GM13976 (cell line): ENCODE measurements at regions of chr10 and their contacts with region 1.

Region 1: GRCh38 chr10:74748468-74749031 is 77.8 kb upstream of the KAT6B start:
- DNase-seq: no peak
- CTCF ChIP-seq: no peak

Region 2: DNA sequence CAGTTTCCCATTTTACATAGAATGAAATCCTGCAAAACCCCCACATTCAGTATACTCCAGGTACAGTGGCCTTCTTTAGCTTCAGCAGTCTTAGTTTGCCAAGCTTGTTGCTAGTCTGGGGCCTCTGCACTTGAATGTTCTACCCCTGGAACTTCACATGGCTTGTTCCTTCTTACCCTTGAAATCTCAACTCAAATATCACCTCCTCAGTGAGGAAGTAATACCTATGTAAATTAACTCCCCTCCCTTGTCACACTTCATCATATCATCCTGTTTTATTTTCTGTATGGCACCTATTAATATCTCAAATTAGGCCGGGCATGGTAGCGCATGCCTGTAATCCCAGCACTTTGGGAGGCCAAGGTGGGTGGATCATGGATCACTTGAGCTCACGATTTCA is 85.9 kb before region 1 on chr10:
- in situ Hi-C with region 1: no loop called
- DNase-seq: no peak
- CTCF ChIP-seq: no peak

Region 3: DNA sequence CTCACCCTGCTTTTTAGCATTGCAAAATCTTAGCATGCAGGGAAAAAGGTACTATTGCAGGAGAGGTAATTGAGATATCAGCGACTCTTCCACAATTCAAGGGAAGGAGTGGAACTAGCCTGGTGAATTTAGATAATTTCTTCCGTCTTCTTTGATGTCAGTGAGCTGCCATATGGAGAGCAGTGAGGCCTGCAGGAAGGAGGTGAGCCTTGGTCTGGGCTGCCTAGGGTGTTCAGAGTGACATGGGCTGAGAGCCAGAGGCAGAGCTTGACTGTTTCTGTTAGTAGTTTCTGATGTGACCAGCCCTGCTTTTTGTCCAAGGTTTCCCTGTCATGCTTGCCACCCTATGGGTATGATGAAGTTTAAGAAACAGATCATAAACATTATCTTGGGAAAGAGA is 106.5 kb after region 1 on chr10:
- in situ Hi-C with region 1: no loop called
- DNase-seq: no peak
- CTCF ChIP-seq: no peak

Region 4: GRCh38 chr10:75029857-75030256 is 281.3 kb after region 1 on chr10:
- in situ Hi-C with region 1: loop called (anchors 10 kb)
- DNase-seq: no peak
- CTCF ChIP-seq: no peak

Region 5: GRCh38 chr10:75099952-75100763 is 351.6 kb after region 1 on chr10:
- in situ Hi-C with region 1: loop called (anchors 10 kb)
- DNase-seq: peak; percentile 93
- CTCF ChIP-seq: peak; percentile 95